AG04449 (cell line): ENCODE measurements at regions of chr2 and their contacts with region 1.

Region 1: DNA sequence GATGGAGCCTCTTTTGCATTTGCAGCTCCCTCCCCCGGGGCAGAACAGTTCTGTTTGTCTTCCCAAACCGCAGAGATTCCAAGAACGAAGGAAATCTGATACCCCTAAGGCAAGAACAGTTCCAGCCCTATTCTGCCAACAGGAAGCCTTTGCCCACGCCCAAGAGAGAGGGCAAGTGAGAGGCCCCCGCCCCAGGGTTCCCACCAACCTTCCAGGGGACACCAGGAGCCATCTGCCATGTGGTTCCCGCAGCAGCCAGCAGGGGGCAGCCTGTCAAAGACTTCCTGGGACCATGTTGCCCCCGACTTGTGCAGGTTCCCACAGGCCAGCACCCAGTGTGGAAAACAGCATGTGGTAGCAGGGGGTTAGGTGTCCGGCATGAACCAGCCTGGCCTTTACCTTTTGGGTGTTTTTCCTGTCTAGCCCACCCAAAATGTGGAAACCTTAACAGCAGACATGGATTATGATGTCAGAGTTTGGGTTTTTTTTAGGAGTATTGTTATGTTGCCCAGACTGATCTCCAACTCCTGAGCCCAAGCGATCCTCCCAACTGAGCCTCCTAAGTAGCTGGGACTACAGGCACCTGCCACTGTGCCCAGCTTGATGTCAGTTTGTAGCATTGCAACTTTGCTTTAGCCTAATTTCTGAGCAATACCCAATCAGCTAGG is 21.7 kb upstream of the EFHD1 start:
- DNase-seq: peak; percentile 33
- H3K4me3 ChIP-seq: no peak overlapping the region
- CTCF ChIP-seq: peak; percentile 84

Region 2: DNA sequence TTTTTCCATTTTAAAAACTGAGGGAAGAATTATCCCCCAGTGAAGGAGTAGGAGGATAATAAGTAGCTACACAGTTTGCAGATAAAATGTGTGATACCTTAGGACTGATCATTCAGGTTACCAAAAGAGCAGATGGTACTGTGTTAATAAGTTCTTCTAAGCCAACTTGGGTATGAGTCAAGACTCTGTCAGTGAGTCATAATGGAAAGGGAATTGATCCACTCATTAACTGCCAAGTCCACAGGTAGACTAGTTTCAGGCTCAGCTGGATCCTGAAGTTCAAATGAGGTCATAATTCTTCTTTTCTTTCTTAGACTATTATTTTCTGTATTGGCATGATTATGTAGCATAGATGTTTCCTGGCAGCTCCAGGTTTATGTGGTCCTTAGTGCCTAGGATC is 375.5 kb before region 1 on chr2:
- CTCF ChIA-PET with region 1: no interaction called
- POLR2A ChIA-PET with region 1: no interaction called
- DNase-seq: no peak
- H3K4me3 ChIP-seq: no peak overlapping the region
- CTCF ChIP-seq: no peak

Region 3: GRCh38 chr2:232521959-232522622 is 89.6 kb before region 1 on chr2:
- CTCF ChIA-PET with region 1: no interaction called
- POLR2A ChIA-PET with region 1: no interaction called
- DNase-seq: no peak
- H3K4me3 ChIP-seq: no peak overlapping the region
- CTCF ChIP-seq: peak; percentile 74

Region 4: DNA sequence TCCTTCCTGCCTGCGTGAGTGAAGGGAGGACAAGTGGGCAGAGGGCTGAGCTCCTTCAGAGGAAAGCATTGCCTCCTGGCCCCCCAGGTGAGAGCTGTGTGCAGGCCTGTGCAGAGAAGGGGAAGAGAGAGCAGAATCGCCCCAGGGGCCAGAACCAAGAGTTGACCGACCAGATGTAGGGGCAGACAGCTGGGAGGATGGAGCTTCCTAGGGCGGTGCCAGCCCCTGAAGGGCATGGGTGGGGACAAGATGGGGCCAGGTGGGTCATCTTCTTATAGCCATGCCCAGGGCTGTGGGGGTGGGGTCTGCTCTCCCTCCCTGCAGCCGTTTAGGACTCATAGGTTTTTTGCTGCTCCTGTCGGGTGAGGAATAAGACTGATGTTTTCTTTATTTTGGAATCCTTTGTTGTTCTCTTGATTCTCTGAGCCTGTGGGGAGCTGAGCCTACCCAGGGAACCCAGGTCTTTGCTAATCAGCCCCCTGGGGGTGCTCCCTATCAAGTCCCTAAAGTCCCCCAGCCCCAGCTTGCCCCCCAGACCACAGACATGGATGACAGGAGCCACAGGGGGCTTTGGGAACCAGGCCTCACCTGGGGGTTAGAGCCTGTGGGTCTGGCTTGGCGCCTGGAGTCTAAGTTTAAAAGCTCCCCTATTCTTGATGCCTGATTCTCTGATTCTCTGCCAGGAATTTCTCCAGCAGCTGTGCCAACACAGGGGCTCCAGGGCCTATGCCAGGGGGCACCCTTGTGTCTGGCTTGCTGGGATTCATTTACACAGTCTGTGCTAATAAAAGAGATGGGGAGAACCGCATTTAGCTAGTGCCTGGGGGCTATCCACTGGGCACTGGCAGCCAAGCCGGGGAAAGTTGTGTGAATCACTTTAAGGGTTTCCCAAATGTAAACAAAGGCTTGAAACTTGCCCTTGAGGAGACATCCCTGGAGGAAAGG is 12.4 kb after region 1 on chr2:
- CTCF ChIA-PET with region 1: interaction called, 22 read pairs
- POLR2A ChIA-PET with region 1: no interaction called
- DNase-seq: no peak
- H3K4me3 ChIP-seq: no peak overlapping the region
- CTCF ChIP-seq: no peak

Region 5: GRCh38 chr2:232632908-232633732 is 21.4 kb after region 1 on chr2 and contains the start of gene EFHD1:
- CTCF ChIA-PET with region 1: interaction called, 10 read pairs
- POLR2A ChIA-PET with region 1: interaction called, 3 read pairs
- DNase-seq: no peak
- H3K4me3 ChIP-seq: peak within 1 kb of the TSS; percentile 59
- CTCF ChIP-seq: no peak

Region 6: DNA sequence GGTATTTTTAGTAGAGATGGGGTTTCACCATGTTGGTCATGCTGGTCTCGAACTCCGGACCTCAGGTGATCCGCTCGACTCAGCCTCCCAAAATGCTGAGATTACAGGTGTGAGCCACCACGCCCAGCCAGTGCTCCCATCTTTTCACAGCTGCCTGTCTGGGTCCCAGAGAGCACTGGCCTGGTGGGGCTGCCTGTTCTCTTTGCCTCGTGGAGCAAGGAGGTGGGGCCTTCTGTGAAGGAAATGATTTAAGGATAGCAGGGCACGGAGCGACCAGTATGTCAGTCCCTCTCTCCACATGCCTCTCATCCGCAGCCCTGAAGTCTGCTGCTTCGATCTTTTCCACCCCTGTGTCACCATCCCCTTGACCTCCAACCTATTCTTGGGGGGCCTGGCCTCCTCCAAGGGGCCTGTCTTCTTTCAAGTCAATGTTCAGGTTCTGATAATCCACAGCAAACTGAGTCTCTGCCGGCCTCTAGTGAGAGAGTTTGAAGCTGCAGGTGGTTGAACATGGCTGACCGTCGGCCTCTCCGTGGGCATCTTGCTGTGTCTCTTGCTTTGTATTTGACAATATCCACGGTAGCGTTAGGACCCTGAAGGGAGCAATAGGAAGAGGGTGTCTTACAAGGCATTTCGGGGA is 57.2 kb after region 1 on chr2:
- CTCF ChIA-PET with region 1: interaction called, 19 read pairs
- POLR2A ChIA-PET with region 1: no interaction called
- DNase-seq: no peak
- H3K4me3 ChIP-seq: no peak overlapping the region
- CTCF ChIP-seq: peak; percentile 72

Region 7: DNA sequence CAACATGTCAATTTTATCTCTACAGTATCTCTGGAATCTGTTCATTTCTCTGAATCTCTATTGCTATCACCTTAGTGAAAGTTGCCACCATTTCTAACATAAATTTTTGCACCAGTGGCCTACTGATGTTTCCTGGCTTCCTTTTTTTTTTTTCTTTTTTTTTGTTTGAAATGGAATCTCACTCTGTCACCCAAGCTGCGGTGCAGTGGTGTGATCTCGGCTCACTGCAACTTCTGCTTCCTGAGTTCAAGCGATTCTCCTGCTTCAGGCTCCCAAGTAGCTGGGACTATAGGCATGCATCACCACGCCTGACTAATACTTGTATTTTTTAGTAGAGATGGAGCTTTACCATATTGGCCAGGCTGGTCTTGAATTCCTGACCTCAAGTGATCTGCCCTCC is 129.6 kb after region 1 on chr2:
- CTCF ChIA-PET with region 1: no interaction called
- POLR2A ChIA-PET with region 1: no interaction called
- DNase-seq: no peak
- H3K4me3 ChIP-seq: no peak overlapping the region
- CTCF ChIP-seq: no peak